Body of pancreas (tissue), 4 donors: ENCODE measurements at regions of chr15 and their contacts with region 1.

Region 1: GRCh38 chr15:26891448-26892181 is 24.8 kb downstream of the GABRA5 start:
- DNase-seq: peak; percentile 44 to 65 (median 52)
- ATAC-seq: peak; percentile 56
- H3K4me3 ChIP-seq: no peak overlapping the region
- H3K27ac ChIP-seq: no peak overlapping the region
- H3K4me1 ChIP-seq: peaks cover 22% of the 10 kb centered on the region
- H3K27me3 ChIP-seq: no peaks in the 10 kb centered on the region
- CTCF ChIP-seq: peak; percentile 43 to 57 (median 53)
- POLR2A ChIP-seq: no peak

Region 2: GRCh38 chr15:27017168-27017809 is 125.7 kb after region 1 on chr15:
- intact Hi-C with region 1: loop called (anchors 10 kb)
- DNase-seq: peak; percentile 43 to 55 (median 50)
- ATAC-seq: no peak
- H3K4me3 ChIP-seq: no peak overlapping the region
- H3K27ac ChIP-seq: no peak overlapping the region
- H3K4me1 ChIP-seq: no peaks in the 10 kb centered on the region
- H3K27me3 ChIP-seq: no peaks in the 10 kb centered on the region
- CTCF ChIP-seq: peak in 6 of 7 experiments; percentile 24 to 71 (median 46)
- POLR2A ChIP-seq: no peak

Region 3: GRCh38 chr15:28110481-28110881 is 1218.9 kb after region 1 on chr15:
- intact Hi-C with region 1: loop called (anchors 10 kb)
- DNase-seq: no peak
- ATAC-seq: no peak
- H3K4me3 ChIP-seq: no peak overlapping the region
- H3K27ac ChIP-seq: no peak overlapping the region
- H3K4me1 ChIP-seq: peaks cover 16% of the 10 kb centered on the region
- H3K27me3 ChIP-seq: peaks cover 0 to 15% of the 10 kb centered on the region in 2 donors
- CTCF ChIP-seq: no peak
- POLR2A ChIP-seq: no peak